GM12878 (cell line): ENCODE measurements at regions of chr3 and their contacts with region 1.

Region 1: GRCh38 chr3:52231502-52232293 is 6.3 kb upstream of the TLR9 start:
- DNase-seq: no peak
- ATAC-seq: peak; percentile 92
- H3K4me3 ChIP-seq: no peak overlapping the region
- H3K27ac ChIP-seq: no peak overlapping the region
- H3K4me1 ChIP-seq: peaks cover 9% of the 10 kb centered on the region
- H3K27me3 ChIP-seq: no peaks in the 10 kb centered on the region
- CTCF ChIP-seq: peak; percentile 92 to 98 (median 95)
- EP300 ChIP-seq: no peak
- POLR2A ChIP-seq: no peak
- RAD21 ChIP-seq: peak; percentile 78

Region 2: DNA sequence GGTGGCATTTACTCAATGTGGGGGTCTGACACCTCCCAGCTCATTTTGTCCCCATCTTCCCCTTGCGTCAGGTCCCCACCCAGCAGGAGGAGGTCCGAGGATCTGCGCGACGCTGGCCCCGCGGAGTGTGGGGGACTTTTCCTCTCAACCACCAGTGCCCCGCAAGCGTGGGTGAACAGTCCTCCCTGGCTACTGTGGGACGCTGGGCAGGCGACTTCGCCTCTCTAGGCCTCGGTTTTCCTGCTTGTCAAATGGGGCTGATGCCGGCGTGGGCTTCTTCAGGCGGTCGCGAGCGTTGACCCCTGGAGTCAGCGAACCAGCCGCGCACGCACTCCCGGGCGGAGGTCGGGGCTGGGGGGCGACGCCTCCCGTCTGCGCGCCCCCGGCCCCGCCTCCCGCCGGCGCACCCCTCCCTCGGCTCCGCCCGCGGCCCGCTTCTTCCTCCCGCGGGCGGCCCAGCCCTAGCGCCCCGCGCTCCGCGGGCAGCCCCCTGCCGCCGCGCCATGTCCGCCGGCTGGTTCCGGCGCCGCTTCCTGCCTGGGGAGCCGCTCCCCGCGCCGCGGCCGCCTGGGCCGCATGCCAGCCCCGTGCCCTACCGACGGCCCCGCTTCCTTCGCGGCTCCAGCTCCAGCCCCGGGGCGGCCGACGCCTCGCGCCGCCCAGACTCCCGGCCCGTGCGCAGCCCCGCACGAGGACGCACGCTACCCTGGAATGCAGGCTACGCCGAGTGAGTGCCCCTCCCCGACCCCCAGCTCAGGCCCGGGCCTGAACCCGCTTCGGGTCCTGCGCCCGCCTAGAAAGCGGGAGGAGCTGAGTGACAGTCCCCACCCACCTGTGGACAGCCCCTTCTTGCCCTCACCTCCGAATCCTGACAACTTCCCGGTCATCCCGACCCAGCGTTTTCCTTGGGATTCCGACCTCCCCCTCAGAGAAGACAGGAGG is 13.9 kb after region 1 on chr3 and contains the start of gene PPM1M:
- CTCF ChIA-PET with region 1: interaction called, 25 read pairs
- POLR2A ChIA-PET with region 1: interaction called, 43 read pairs
- RAD21 ChIA-PET with region 1: interaction called, 6 read pairs
- SMC1A ChIA-PET with region 1: interaction called, 8 read pairs
- in situ Hi-C with region 1: no loop called
- intact Hi-C with region 1: no loop called
- DNase-seq: no peak
- ATAC-seq: peak; percentile 10
- H3K4me3 ChIP-seq: peak within 1 kb of the TSS; percentile 89
- H3K27ac ChIP-seq: peak within 1 kb of the TSS; percentile 67
- H3K4me1 ChIP-seq: peaks cover 49% of the 10 kb centered on the region
- H3K27me3 ChIP-seq: no peaks in the 10 kb centered on the region
- CTCF ChIP-seq: no peak
- EP300 ChIP-seq: no peak
- POLR2A ChIP-seq: peak; percentile 48
- RAD21 ChIP-seq: no peak
- polyA plus RNA-seq, gene PPM1M: 7.5 to 15.3 TPM

Region 3: GRCh38 chr3:52253314-52254304 is 21.9 kb after region 1 on chr3:
- CTCF ChIA-PET with region 1: interaction called, 17 read pairs
- POLR2A ChIA-PET with region 1: interaction called, 8 read pairs
- RAD21 ChIA-PET with region 1: interaction called, 9 read pairs
- SMC1A ChIA-PET with region 1: interaction called, 6 read pairs
- in situ Hi-C with region 1: no loop called
- intact Hi-C with region 1: no loop called
- DNase-seq: peak; percentile 85
- ATAC-seq: peak; percentile 98
- H3K4me3 ChIP-seq: no peak overlapping the region
- H3K27ac ChIP-seq: peak overlapping the region; percentile 88
- H3K4me1 ChIP-seq: peaks cover 18% of the 10 kb centered on the region
- H3K27me3 ChIP-seq: no peaks in the 10 kb centered on the region
- CTCF ChIP-seq: no peak
- EP300 ChIP-seq: peak; percentile 66 to 86; a peak in 3 of 4 replicates
- POLR2A ChIP-seq: peak; percentile 75
- RAD21 ChIP-seq: 0 out of 2 replicates have a peak, but pooled peaks have one; percentile 2

Region 4: DNA sequence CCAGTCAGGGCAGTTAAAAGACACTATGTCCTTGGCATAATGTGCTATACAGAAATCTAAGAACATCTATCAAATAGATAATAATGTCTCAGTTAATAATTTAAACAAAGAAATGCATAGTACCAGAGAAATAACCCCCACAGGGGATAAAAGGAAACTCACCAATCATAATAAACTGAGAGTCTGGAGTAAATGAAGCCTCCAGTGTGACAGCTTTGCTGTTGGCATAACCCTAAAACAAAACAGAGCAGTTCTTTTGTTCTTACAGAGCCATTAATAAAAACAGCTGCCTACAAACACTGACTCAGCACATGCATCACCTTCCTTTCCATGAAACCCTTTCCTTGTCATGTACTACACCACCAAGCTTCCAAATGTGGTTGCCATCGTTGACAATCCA is 27.3 kb after region 1 on chr3:
- CTCF ChIA-PET with region 1: interaction called, 17 read pairs
- POLR2A ChIA-PET with region 1: interaction called, 8 read pairs
- RAD21 ChIA-PET with region 1: no interaction called
- SMC1A ChIA-PET with region 1: interaction called, 4 read pairs
- in situ Hi-C with region 1: no loop called
- intact Hi-C with region 1: no loop called
- DNase-seq: no peak
- ATAC-seq: no peak
- H3K4me3 ChIP-seq: no peak overlapping the region
- H3K27ac ChIP-seq: no peak overlapping the region
- H3K4me1 ChIP-seq: peaks cover 10% of the 10 kb centered on the region
- H3K27me3 ChIP-seq: no peaks in the 10 kb centered on the region
- CTCF ChIP-seq: no peak
- EP300 ChIP-seq: no peak
- POLR2A ChIP-seq: no peak
- RAD21 ChIP-seq: no peak

Region 5: DNA sequence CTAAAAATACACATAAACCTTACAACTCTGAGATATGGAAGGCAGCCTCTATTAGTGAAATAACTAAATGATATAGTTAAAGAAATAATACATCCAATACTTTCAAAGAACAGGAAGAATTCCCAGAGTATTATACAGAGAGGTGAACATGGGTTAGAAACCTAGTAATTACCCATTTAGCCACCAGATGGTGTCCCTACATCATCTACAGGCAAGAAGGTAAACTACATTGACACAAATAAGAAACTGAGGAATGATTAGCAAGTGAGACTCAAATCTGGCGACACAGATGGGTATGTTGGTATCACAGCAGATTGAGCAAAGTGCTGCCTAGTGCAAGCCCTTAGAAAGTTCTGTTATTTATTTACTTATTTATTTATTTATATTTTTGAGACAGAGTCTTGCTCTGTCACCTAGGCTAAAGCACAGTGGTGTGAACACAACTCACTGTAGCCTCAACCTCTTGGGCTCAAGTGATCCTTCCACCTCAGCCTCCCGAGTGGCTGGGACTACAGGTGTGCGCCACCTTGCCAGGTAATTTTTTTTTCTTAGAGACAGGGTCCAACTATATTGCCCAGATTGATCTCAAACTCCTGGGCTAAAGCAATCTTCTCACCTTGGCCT is 510.8 kb after region 1 on chr3:
- CTCF ChIA-PET with region 1: no interaction called
- POLR2A ChIA-PET with region 1: no interaction called
- RAD21 ChIA-PET with region 1: no interaction called
- SMC1A ChIA-PET with region 1: no interaction called
- in situ Hi-C with region 1: no loop called
- intact Hi-C with region 1: no loop called
- DNase-seq: peak; percentile 15
- ATAC-seq: peak; percentile 83
- H3K4me3 ChIP-seq: no peak overlapping the region
- H3K27ac ChIP-seq: no peak overlapping the region
- H3K4me1 ChIP-seq: no peaks in the 10 kb centered on the region
- H3K27me3 ChIP-seq: no peaks in the 10 kb centered on the region
- CTCF ChIP-seq: peak; percentile 60 to 80 (median 68); a peak in 5 of 6 replicates
- EP300 ChIP-seq: no peak
- POLR2A ChIP-seq: no peak
- RAD21 ChIP-seq: peak; percentile 91